ENCODE measurements at regions of chr4 and their contacts with region 1.

Region 1: DNA sequence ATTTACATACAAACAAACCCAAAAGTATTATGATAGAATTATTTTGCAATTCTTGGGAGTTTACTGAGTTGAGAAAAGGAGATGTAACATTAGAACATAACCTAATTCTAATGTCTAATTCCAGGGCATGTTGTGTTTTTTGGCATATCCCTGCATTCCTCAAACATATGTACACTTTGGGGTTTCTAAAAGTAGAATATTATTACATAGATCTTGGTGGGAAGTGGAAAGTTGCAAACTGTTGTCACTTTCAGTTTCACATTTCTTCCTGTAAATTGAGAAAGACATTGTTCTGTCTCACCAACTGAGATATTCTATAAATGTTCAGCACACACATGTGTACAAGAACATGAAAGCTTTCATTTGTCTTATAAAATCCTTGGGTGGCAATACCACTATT is 24.4 kb upstream of the GBA3 start:
- DNase-seq: no peak
- H3K4me3 Mint-ChIP-seq: no peak overlapping the region
- H3K27ac Mint-ChIP-seq: peak overlapping the region; percentile 65
- H3K4me1 Mint-ChIP-seq: peaks cover 49% of the 10 kb centered on the region
- H3K27me3 Mint-ChIP-seq: no peaks in the 10 kb centered on the region

Region 2: DNA sequence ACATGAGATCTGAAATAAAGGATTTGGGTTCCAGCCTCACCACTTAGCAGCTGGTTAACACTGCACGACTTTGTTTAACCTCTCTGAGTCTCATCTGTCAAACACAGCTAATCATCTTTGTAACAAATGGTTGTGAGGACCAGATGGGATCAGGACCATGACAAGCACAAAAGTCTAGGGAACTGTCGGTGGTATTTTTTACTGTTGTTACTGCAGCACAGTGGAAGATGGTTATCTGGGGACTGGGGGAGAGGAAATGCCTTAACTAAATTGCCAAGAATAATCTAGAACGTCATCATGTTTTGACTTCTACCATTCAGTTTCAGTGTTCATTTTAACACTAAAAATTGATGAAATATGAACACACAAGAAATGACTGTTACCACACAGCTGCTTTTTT is 251.9 kb before region 1 on chr4:
- CTCF ChIA-PET with region 1: no interaction called
- intact Hi-C with region 1: loop called (anchors 5 kb)
- DNase-seq: no peak
- H3K4me3 Mint-ChIP-seq: no peak overlapping the region
- H3K27ac Mint-ChIP-seq: no peak overlapping the region
- H3K4me1 Mint-ChIP-seq: peaks cover 10% of the 10 kb centered on the region
- H3K27me3 Mint-ChIP-seq: no peaks in the 10 kb centered on the region

Region 3: GRCh38 chr4:22444813-22445212 is 223.5 kb before region 1 on chr4:
- CTCF ChIA-PET with region 1: no interaction called
- intact Hi-C with region 1: loop called (anchors 2 kb)
- DNase-seq: peak; percentile 9
- H3K4me3 Mint-ChIP-seq: peak overlapping the region; percentile 10
- H3K27ac Mint-ChIP-seq: peak overlapping the region; percentile 93
- H3K4me1 Mint-ChIP-seq: peaks cover 40% of the 10 kb centered on the region
- H3K27me3 Mint-ChIP-seq: no peaks in the 10 kb centered on the region

Region 4: DNA sequence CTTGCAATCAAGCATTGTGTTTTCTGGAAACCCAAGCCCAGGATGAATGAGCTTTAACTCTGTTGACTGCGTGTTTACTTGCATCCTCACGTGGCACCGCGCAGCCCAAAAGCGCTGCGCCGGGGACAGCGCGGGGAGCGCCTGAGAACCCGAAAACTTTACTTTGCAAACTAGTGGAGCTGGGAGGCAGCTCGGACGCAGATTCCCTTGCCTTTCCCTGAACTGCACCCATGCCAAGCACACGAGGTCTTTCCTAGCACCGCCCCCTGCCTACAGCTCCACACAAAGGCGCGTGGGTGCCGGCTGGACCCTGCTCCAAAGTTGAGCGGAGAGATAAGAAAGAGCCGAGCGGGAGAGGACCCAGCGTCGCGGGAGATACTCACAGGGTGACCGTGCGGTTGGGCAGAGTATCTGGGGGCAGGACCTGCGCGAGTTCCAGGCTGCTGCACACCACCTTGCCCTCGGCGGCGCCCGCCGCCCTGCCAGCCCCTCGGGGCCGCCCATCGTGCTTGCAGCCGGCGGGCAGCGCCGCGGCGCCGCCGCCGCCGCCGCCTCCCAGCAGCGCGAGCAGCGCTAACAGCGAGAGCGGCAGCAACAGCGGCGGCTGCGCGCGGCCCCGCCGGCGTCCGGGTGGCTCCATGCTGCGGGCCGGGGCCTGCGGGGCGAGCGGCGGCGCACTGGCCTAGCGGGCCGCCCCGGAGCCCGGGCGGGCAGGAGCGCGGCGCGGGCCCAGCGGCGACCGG is 153.0 kb before region 1 on chr4:
- CTCF ChIA-PET with region 1: no interaction called
- intact Hi-C with region 1: loop called (anchors 5 kb)
- DNase-seq: peak; percentile 34
- H3K4me3 Mint-ChIP-seq: peak overlapping the region; percentile 97
- H3K27ac Mint-ChIP-seq: peak overlapping the region; percentile 77
- H3K4me1 Mint-ChIP-seq: peaks cover 17% of the 10 kb centered on the region
- H3K27me3 Mint-ChIP-seq: peaks cover 9% of the 10 kb centered on the region

Region 5: GRCh38 chr4:22653752-22654151 is 14.5 kb before region 1 on chr4:
- CTCF ChIA-PET with region 1: interaction called, 3 read pairs
- intact Hi-C with region 1: loop called (anchors 2 kb)
- DNase-seq: no peak
- H3K4me3 Mint-ChIP-seq: no peak overlapping the region
- H3K27ac Mint-ChIP-seq: no peak overlapping the region
- H3K4me1 Mint-ChIP-seq: peaks cover 12% of the 10 kb centered on the region
- H3K27me3 Mint-ChIP-seq: no peaks in the 10 kb centered on the region

Region 6: DNA sequence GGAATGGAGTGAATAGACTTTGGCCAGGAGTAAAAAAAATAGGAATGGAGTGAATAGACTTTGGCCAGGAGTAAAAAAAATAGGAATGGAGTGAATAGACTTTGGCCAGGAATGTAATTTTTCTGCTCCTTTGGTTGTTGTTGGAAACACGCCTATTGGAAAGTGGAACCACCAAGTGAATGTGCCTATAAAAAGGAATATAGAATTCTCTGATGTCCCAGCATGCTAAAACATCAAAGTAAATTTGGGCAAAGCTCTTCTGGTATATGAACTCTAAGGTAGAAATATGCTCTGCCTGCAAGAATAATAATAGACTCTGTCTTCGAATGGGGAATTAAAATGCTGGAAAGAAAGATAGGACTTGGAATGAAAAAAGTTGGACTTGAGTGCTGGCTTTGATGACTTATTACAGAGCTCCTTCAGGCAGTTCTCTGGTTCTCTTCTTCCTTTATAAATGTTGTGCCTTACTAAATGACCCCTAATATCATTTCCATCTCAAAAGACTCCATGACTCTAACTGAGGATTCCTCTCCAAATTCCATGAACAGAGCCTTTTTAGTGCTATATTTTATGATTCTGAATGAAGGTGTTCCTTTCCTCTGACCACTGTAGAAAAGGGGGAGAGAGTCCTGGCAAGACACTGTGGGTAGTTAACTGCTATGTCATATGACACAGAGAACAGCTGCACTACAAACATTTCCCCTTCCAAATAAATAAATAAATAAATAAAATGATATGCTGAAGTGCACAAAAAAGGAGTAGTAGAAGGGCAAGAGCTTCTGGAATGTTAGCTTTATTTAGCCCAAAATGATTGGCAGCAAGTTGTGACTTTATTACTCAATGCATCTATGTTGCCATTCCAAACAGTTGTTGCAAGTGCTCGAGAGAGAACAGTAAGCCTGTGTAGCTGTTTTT is 10.9 kb after region 1 on chr4:
- CTCF ChIA-PET with region 1: interaction called, 4 read pairs
- intact Hi-C with region 1: loop called (anchors 1 kb)
- DNase-seq: no peak
- H3K4me3 Mint-ChIP-seq: no peak overlapping the region
- H3K27ac Mint-ChIP-seq: no peak overlapping the region
- H3K4me1 Mint-ChIP-seq: peaks cover 51% of the 10 kb centered on the region
- H3K27me3 Mint-ChIP-seq: no peaks in the 10 kb centered on the region

Measured in activated naive CD4-positive, alpha-beta T cell treated with anti-CD3 and anti-CD28 coated beads for 36 hours (primary cell).